T-cell (primary cell): ENCODE measurements at regions of chr17 and their contacts with region 1.

Region 1: GRCh38 chr17:48074315-48075081 is 26.3 kb downstream of the NFE2L1 start:
- DNase-seq: peak; percentile 32 to 84 (median 68)
- ATAC-seq: peak; percentile 71 to 81 (median 76)
- H3K4me3 ChIP-seq: no peak overlapping the region
- H3K4me3 Mint-ChIP-seq: no peak overlapping the region
- H3K27ac ChIP-seq: no peak overlapping the region
- H3K27ac Mint-ChIP-seq: no peak overlapping the region
- H3K4me1 ChIP-seq: no peaks in the 10 kb centered on the region
- H3K4me1 Mint-ChIP-seq: no peaks in the 10 kb centered on the region
- H3K27me3 ChIP-seq: no peaks in the 10 kb centered on the region
- H3K27me3 Mint-ChIP-seq: no peaks in the 10 kb centered on the region

Region 2: GRCh38 chr17:47949136-47949759 is 125.2 kb before region 1 on chr17:
- CTCF ChIA-PET with region 1: interaction called in 1 of 2 experiments, 10 read pairs
- POLR2A ChIA-PET with region 1: no interaction called
- DNase-seq: peak; percentile 24 to 82 (median 66)
- ATAC-seq: peak; percentile 69 to 75 (median 72)
- H3K4me3 ChIP-seq: peak overlapping the region; percentile 36 to 42
- H3K4me3 Mint-ChIP-seq: peak overlapping the region; percentile 61 to 72 (median 67)
- H3K27ac ChIP-seq: peak overlapping the region; percentile 21
- H3K27ac Mint-ChIP-seq: peak overlapping the region; percentile 83 to 92
- H3K4me1 ChIP-seq: peaks cover 26 to 44% of the 10 kb centered on the region in 2 experiments
- H3K4me1 Mint-ChIP-seq: peaks cover 37 to 47% (median 42%) of the 10 kb centered on the region in 3 donors
- H3K27me3 ChIP-seq: no peaks in the 10 kb centered on the region
- H3K27me3 Mint-ChIP-seq: no peaks in the 10 kb centered on the region

Region 3: DNA sequence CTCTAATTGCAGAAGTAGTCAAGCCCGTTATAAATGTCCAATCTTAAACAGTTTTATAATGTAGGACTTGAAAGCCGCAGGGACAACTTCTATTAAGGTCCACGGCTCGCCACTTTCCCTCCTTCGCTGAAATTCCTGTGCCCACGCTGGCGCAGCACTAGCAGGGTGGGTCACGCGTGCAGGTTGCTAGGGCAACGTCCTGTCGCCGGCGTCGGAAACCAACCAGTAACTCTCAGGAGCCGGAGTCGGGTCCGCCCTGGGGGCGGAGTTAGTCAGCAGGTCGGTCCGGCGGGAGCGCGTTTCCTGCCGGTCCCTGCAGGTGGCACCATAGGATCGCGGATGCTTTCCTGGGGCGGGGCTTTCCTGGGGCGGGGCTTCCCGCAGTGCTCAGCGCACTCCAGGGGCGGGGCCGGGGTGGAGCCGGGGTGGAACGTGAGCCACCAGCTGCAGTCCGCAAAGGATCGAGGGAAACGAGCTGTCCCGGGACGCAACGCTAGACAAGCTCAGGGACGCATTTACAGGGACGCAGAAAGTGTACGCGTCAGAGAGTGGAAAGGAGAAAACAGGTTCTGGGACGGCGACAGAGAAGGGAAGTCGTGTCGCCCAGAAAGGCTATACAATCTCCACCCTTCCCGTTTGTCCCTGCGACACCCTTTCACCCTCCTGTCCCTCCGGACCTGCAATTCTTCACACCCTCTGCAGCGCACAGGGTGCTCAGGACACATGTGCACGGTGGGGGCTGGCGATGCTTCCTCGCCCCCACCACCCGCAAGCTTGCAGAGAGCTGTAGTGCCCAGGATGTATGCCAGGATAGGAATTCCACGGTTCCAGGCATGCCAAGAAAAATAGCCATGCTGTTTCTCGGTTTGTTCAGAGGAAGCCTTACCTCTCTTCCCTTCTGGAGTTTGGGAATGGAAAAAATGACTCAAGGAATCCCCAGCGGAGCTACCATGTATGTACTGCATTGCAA is 49.3 kb before region 1 on chr17:
- CTCF ChIA-PET with region 1: interaction called, 5 to 37 read pairs
- POLR2A ChIA-PET with region 1: no interaction called
- DNase-seq: peak; percentile 92 to 99 (median 97)
- ATAC-seq: peak; percentile 90 to 95 (median 92)
- H3K4me3 ChIP-seq: peak overlapping the region; percentile 49 to 84
- H3K4me3 Mint-ChIP-seq: peak overlapping the region; percentile 79 to 90 (median 86)
- H3K27ac ChIP-seq: no peak overlapping the region
- H3K27ac Mint-ChIP-seq: peak overlapping the region; percentile 81 to 90
- H3K4me1 ChIP-seq: peaks cover 20 to 36% of the 10 kb centered on the region in 2 experiments
- H3K4me1 Mint-ChIP-seq: peaks cover 28 to 35% (median 32%) of the 10 kb centered on the region in 3 donors
- H3K27me3 ChIP-seq: peaks cover 0 to 68% of the 10 kb centered on the region in 2 experiments
- H3K27me3 Mint-ChIP-seq: peaks cover 31 to 34% of the 10 kb centered on the region in 2 donors